MCF 10A (cell line): ENCODE measurements at regions of chr17 and their contacts with region 1.

Region 1: DNA sequence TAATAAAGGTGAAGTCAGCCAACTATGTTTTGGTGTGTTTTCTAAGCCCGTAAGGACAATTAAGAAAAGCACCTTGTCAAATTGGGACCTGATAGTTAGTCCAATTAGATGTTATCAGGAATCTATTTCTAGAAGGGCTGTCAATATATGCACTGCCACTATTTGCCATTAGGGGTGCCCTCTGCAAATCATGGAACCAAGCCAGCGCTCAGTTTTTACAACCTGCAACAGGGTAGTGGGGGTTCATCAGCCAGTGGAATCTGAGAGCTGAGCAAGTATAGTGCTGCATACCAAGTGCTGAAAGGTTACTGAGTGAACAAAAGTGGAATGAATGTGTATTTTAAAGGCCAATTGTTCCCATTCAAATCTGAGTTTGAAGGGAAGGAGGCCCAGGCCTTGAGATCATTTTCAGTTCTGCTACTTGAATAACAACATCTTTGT is 10.4 kb downstream of the PRR11 start:
- DNase-seq: peak; percentile 60
- H3K4me3 Mint-ChIP-seq: no peak overlapping the region
- H3K27ac Mint-ChIP-seq: no peak overlapping the region
- H3K4me1 Mint-ChIP-seq: peaks cover 11% of the 10 kb centered on the region
- H3K27me3 Mint-ChIP-seq: no peaks in the 10 kb centered on the region
- CTCF ChIP-seq: peak; percentile 63

Region 2: GRCh38 chr17:59149841-59150511 is 15.9 kb before region 1 on chr17:
- CTCF ChIA-PET with region 1: no interaction called
- POLR2A ChIA-PET with region 1: interaction called, 12 read pairs
- intact Hi-C with region 1: no loop called
- DNase-seq: no peak
- H3K4me3 Mint-ChIP-seq: no peak overlapping the region
- H3K27ac Mint-ChIP-seq: peak overlapping the region; percentile 44
- H3K4me1 Mint-ChIP-seq: peaks cover 33% of the 10 kb centered on the region
- H3K27me3 Mint-ChIP-seq: no peaks in the 10 kb centered on the region
- CTCF ChIP-seq: no peak